ENCODE measurements at regions of chr7 and their contacts with region 1.

Region 1: DNA sequence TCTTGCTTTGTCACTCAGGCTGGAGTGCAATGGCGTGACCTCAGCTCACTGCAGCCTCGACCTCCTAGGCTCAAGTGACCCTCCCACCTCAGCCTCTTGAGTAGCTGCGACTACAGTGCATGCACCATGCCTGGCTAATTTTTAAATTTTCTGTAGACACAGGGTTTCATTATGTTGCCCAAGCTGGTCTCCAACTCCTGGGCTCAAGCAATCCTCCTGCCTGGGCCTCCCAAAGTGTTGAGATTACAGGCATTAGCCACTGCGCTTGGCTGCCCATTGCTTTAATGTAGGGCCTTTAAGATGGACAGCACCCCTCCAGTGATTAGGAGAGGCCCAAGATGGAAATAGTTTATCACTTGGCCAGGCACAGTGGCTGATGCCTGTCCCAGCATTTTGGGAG is 39.4 kb downstream of the NIPSNAP2 start:
- DNase-seq: no peak
- ATAC-seq: no peak
- H3K4me3 ChIP-seq: no peak overlapping the region
- H3K27ac ChIP-seq: no peak overlapping the region
- H3K4me1 ChIP-seq: no peaks in the 10 kb centered on the region
- H3K27me3 ChIP-seq: no peaks in the 10 kb centered on the region
- CTCF ChIP-seq: no peak
- POLR2A ChIP-seq: no peak
- RAD21 ChIP-seq: no peak

Region 2: GRCh38 chr7:56074371-56074791 is 70.6 kb after region 1 on chr7:
- CTCF ChIA-PET with region 1: interaction called, 8 read pairs
- POLR2A ChIA-PET with region 1: no interaction called
- dilution Hi-C with region 1: no loop called
- in situ Hi-C with region 1: loop called (anchors 5 kb)
- intact Hi-C with region 1: loop called (anchors 1 kb)
- DNase-seq: peak; percentile 72
- ATAC-seq: peak; percentile 95
- H3K4me3 ChIP-seq: no peak overlapping the region
- H3K27ac ChIP-seq: no peak overlapping the region
- H3K4me1 ChIP-seq: peaks cover 8% of the 10 kb centered on the region; the same call in 1 of the 2 replicates
- H3K27me3 ChIP-seq: no peaks in the 10 kb centered on the region
- CTCF ChIP-seq: peak; percentile 96
- POLR2A ChIP-seq: 0 out of 2 replicates have a peak, but pooled peaks have one; percentile 31
- RAD21 ChIP-seq: peak; percentile 95